ENCODE measurements at regions of chr2 and their contacts with region 1.

Region 1: GRCh38 chr2:203535078-203535783 is at the start of gene RAPH1:
- DNase-seq: peak; percentile 89 to 94 (median 92)
- ATAC-seq: peak; percentile 74 to 98 (median 94)
- H3K4me3 ChIP-seq: peak within 1 kb of the TSS; percentile 65 to 98 (median 96)
- H3K27ac ChIP-seq: peak within 1 kb of the TSS; percentile 87 to 98 (median 94)
- H3K4me1 ChIP-seq: peaks cover 0 to 30% (median 12%) of the 10 kb centered on the region in 12 donors
- H3K27me3 ChIP-seq: no peaks in the 10 kb centered on the region
- CTCF ChIP-seq: peak in 1 of 12 donors; percentile 20
- POLR2A ChIP-seq: peak in 1 of 2 donors; percentile 37
- total RNA-seq, gene RAPH1: 13.1 to 30.4 (median 16.8) TPM

Region 2: DNA sequence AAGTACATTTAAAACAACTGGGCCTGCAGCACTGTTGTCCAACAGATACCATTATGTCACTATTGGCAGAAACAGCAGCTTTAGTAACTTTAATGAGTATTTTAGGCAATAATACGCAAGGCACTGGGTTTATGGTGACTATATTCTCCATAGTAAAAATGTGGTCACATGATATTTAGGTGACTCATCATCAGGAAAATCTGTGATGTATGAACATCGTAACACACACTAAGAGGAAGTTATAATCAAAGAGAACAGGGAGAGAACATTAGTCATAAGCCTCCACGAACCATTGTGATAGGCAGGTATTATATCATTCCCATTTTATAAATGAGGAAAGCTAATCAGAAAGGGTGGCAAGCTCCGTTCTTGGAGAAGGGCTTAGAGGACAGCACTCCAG is 37.1 kb before region 1 on chr2:
- intact Hi-C with region 1: loop called in 1 of 10 experiments (anchors 5 kb)
- DNase-seq: no peak
- ATAC-seq: peak in 3 of 4 donors; percentile 61 to 74 (median 65)
- H3K4me3 ChIP-seq: no peak overlapping the region
- H3K27ac ChIP-seq: peak overlapping the region in 4 of 12 donors; percentile 1 to 11 (median 4)
- H3K4me1 ChIP-seq: peaks cover 0 to 57% (median 13%) of the 10 kb centered on the region in 12 donors
- H3K27me3 ChIP-seq: no peaks in the 10 kb centered on the region
- CTCF ChIP-seq: no peak
- POLR2A ChIP-seq: no peak

Region 3: DNA sequence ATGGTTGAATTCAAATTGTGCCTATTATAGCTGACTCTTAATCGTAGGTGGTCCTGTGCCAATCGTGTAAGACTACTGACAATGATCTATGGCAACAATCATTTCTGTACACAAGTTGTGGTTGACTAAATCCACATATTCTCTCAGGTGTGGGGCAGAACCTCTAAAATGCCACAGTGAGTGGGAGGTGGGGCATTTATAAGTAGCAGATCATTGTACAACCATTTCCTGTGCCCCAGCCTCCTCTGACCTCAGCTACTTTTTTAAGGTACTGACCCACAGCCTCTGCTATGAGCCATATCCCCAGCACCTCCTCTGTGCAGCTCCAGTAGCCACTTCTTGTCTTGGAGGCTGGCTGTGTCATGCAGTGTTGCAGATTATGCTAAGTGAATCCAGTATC is 48.5 kb after region 1 on chr2:
- intact Hi-C with region 1: loop called in 1 of 10 experiments (anchors 5 kb)
- DNase-seq: peak in 4 of 5 donors; percentile 28 to 62 (median 34)
- ATAC-seq: peak; percentile 67 to 91 (median 84)
- H3K4me3 ChIP-seq: no peak overlapping the region
- H3K27ac ChIP-seq: peak overlapping the region in 3 of 12 donors; percentile 32 to 61 (median 60)
- H3K4me1 ChIP-seq: peaks cover 0 to 33% (median 19%) of the 10 kb centered on the region in 12 donors
- H3K27me3 ChIP-seq: no peaks in the 10 kb centered on the region
- CTCF ChIP-seq: no peak
- POLR2A ChIP-seq: no peak

Region 4: GRCh38 chr2:203636588-203637470 is 101.6 kb after region 1 on chr2:
- intact Hi-C with region 1: loop called in 3 of 10 experiments (anchors 10 kb)
- DNase-seq: peak in 1 of 5 donors; percentile 34
- ATAC-seq: peak; percentile 67 to 78 (median 77)
- H3K4me3 ChIP-seq: no peak overlapping the region
- H3K27ac ChIP-seq: peak overlapping the region; percentile 8 to 83 (median 34)
- H3K4me1 ChIP-seq: peaks cover 0 to 25% (median 14%) of the 10 kb centered on the region in 12 donors
- H3K27me3 ChIP-seq: no peaks in the 10 kb centered on the region
- CTCF ChIP-seq: no peak
- POLR2A ChIP-seq: no peak

Region 5: DNA sequence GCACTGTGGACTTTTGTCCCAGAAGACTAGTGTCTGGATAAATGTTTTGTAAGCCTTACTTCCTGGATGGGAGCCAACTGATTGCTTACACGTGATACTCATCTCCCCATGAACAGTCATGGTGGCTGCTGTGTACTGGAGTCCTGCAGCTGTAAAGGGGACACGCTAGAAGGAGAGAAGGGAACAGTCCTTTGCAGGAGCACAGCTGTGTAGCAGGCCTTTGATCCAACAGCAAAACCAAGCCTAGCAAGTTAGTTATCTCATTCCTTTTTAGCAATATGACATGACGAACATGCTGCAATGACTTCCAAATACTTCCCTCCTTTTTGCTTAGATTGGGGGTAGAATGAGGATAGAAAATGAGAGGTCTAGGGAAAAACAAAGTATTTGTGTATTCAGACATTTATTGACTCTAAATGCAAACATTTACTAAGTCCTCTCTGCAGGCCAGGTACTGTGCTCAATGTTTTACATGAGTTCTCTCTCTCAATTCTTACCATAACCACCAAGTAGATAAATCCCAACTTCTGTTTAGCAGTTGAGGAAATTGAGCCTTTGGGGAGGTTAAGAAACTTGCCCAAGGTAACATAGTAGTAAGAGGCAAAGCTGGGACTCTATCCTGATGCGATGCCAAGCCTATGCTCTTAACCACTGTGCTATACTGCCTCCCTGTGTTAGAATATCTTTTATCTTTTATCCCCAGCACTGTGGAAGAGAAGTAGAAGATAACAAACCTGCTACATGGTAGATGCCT is 115.8 kb after region 1 on chr2:
- intact Hi-C with region 1: loop called in 1 of 10 experiments (anchors 10 kb)
- DNase-seq: peak in 1 of 5 donors; percentile 23
- ATAC-seq: peak; percentile 71 to 86 (median 80)
- H3K4me3 ChIP-seq: no peak overlapping the region
- H3K27ac ChIP-seq: peak overlapping the region in 11 of 12 donors; percentile 30 to 75 (median 56)
- H3K4me1 ChIP-seq: peaks cover 0 to 37% (median 23%) of the 10 kb centered on the region in 12 donors
- H3K27me3 ChIP-seq: no peaks in the 10 kb centered on the region
- CTCF ChIP-seq: peak in 10 of 12 donors; percentile 22 to 59 (median 38)
- POLR2A ChIP-seq: no peak

Region 6: GRCh38 chr2:203683932-203684556 is 148.8 kb after region 1 on chr2:
- intact Hi-C with region 1: loop called in 4 of 10 experiments (anchors 5 to 10 kb)
- DNase-seq: peak in 1 of 5 donors; percentile 45
- ATAC-seq: peak in 3 of 4 donors; percentile 29 to 49 (median 42)
- H3K4me3 ChIP-seq: no peak overlapping the region
- H3K27ac ChIP-seq: peak overlapping the region; percentile 68 to 94 (median 84)
- H3K4me1 ChIP-seq: peaks cover 12 to 87% (median 73%) of the 10 kb centered on the region in 12 donors
- H3K27me3 ChIP-seq: no peaks in the 10 kb centered on the region
- CTCF ChIP-seq: no peak
- POLR2A ChIP-seq: no peak

Region 7: DNA sequence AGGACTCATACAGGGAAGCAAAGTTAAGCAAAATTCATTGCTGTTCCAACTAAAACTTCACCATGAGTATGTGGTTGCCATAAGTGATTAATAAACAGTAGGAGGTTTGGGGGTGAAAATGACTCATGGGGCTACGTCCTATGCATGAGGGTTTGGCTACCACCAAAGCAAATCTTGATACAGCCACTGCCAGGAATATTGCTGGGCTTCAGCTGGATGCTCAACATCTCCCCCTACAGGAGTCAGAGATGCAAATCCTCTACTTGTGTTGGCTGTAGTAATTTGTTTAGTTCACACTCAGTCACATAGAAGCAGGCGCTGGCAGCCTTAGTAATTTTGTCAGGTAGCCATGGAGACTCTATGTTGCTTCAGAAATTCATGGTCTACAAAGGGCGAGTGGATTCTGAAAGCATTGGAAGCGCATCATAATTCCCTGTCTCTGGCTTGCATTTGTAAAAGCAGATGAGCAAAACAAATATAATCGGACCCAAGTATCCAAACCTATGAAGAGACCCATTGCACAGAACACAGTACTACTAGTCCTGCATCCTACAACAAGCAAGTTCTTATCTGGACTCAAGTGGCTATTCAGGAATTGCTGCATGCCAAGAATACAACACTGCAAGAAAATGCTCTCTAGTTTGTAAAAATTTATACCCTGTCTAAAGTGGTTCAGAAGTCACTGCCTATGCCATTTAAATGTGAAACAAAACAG is 247.2 kb after region 1 on chr2:
- intact Hi-C with region 1: loop called in 2 of 10 experiments (anchors 2 to 5 kb)
- DNase-seq: peak in 4 of 5 donors; percentile 31 to 55 (median 40)
- ATAC-seq: peak in 3 of 4 donors; percentile 67 to 80 (median 69)
- H3K4me3 ChIP-seq: no peak overlapping the region
- H3K27ac ChIP-seq: peak overlapping the region in 4 of 12 donors; percentile 1 to 44 (median 14)
- H3K4me1 ChIP-seq: peaks cover 0 to 47% (median 21%) of the 10 kb centered on the region in 12 donors
- H3K27me3 ChIP-seq: no peaks in the 10 kb centered on the region
- CTCF ChIP-seq: peak; percentile 55 to 81 (median 70)
- POLR2A ChIP-seq: no peak

Measured in heart left ventricle (tissue), 16 donors.